Dorsolateral prefrontal cortex (tissue), 120 donors: ENCODE measurements at regions of chr1 and their contacts with region 1.

Region 1: DNA sequence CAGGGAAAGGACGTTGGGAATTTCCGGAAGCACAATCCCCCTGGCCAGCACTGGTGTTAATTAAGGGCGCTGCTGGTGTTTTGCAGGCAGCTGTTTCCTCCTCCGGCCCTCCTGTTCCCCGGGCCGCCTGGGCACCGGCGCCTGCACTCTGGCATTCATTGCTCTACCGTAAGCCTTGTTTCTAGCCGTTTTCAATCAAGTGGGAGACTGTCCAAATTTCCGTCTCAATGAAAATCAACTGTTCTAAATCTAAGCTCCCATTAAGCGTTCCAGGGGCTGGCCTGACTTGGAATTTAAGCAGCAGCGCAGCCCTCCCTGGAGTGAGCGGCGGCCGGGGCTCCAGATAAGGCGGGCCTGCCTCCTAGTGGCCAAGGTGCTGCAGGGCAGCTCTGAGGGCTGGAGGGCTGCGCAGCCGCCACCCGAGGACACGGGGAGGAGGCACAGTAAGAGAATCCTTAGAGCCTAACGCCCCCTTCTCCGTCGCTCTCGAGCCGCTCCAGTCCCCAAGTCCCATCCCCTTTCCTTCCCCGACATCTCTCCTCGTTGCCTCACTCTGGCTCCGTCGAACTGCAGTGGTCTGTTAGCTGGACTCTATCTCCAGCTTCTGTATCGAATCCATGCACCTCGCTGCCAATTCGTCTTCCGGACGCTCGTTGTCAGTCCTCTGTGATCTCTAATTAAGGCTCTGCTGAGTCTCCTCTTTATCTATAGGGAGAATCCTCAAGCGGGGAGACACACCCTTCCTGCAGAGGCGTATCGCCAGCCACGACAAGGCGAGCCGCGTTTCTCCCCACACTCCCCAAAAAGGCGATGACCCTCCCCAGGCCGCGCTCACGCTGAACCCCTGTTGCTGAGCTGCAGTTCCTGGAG is 57.8 kb upstream of the LRRC8D start:
- DNase-seq: peak; percentile 63 to 90 (median 86)
- H3K4me3 ChIP-seq: peak overlapping the region; percentile 39 to 79 (median 62)
- H3K27ac ChIP-seq: peak overlapping the region in 54 of 59 donors; percentile 5 to 88 (median 67)
- H3K27me3 ChIP-seq: no peaks in the 10 kb centered on the region
- CTCF ChIP-seq: peak; percentile 88 to 100 (median 98)

Region 2: GRCh38 chr1:89483010-89483756 is 279.8 kb before region 1 on chr1:
- intact Hi-C with region 1: loop called (anchors 2 to 5 kb)
- DNase-seq: peak; percentile 55 to 92 (median 76)
- H3K4me3 ChIP-seq: peak overlapping the region in 1 of 59 donors; percentile 6
- H3K27ac ChIP-seq: peak overlapping the region in 6 of 59 donors; percentile 2 to 45 (median 24)
- H3K27me3 ChIP-seq: no peaks in the 10 kb centered on the region
- CTCF ChIP-seq: peak; percentile 72 to 96 (median 88)

Region 3: DNA sequence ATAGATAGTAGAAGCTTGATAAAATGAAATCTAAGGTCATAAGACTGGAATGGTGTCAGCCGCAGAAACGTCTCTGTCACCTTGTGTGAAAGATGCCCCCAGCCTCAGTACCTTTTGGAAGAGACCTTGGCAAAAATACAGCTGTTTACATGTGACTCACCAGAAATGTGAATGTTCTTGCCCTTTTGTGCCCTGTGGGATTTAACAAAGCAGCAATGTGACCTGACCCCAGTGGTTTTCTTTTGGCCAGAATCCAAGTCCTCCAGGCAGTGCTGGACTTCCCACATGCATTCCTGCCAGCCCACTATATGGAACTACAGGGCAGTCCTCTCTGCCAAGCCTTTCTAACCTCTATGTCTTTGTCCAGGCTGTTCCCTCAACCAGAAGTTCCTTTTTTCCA is 157.3 kb before region 1 on chr1:
- intact Hi-C with region 1: loop called in 1 of 2 experiments (anchors 10 kb)
- DNase-seq: no peak
- H3K4me3 ChIP-seq: no peak overlapping the region
- H3K27ac ChIP-seq: peak overlapping the region in 4 of 59 donors; percentile 2 to 65 (median 37)
- H3K27me3 ChIP-seq: no peaks in the 10 kb centered on the region
- CTCF ChIP-seq: no peak

Region 4: DNA sequence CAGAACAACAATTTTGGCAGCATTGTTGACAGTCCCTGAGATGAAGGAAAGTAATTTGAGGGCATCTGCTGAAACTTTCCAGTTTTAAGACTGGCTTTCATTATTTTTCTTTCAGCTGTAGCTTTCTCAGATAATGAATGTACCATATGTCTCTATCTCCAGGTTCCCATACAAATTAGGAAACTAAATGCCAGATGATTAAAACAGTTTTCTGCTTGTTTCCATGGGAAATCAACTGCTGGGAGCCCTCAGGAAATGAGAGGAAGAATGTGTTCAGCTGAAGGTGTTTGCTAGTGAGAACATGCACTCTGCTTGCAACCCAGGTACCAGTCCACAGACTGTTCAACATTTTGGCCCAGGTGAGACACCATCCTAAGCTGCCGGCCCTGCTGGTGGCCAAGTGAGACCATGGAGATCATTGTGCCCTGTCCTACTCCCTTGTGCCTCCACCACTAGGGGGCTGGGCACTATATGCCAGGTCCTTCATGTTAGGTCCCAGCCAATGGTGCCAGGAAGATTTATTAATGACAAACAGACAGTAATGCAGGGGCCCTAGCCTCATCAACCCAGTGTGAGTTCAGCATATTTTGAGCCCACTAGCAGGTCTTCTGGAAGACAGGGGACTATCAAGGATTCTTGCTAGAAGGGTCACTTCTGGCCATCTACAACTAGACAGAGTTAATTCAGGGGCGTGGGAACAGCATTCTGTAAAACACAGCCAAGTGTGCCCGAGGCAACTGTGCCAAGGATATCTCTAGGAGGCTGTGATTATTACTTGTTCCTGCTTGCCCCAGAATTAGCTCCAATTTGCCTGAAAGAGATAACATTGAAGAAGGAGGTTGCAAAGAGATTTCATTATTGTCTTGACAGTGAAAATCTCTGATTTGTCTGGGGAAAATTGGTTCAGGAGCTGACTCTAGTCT is 147.1 kb before region 1 on chr1:
- intact Hi-C with region 1: loop called in 1 of 2 experiments (anchors 5 kb)
- DNase-seq: no peak
- H3K4me3 ChIP-seq: no peak overlapping the region
- H3K27ac ChIP-seq: peak overlapping the region in 50 of 59 donors; percentile 9 to 77 (median 56)
- H3K27me3 ChIP-seq: no peaks in the 10 kb centered on the region
- CTCF ChIP-seq: peak in 53 of 56 donors; percentile 19 to 59 (median 47)

Region 5: DNA sequence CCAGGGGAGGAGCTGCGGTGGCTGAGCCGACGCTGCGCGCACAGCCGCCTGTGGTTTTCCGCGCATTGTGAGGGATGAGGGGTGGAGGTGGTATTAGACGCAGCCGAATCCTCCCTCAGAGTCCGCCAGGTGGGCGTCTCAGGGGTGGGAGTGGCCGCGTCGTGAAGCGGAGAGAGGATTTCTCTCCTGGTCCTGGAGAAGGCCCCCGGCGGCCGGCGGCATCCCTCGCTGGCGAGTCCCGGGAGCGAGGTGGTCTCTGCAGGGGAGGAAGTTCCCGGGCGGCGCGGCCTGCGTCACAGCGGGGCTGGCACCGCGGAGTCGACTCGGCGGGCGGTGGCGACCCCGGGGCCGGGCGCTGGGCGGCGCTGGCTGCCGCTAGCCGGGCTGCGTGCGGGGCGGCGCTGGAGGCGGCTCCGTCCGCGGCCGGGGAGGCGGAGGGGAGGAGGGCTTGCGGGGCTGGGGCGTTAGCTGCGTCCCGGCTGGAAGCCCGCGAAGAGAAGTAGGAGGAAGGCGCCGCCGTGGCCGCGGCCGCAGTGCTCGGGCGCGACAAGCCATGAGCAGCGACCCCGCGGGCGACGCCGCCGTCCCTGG is 130.3 kb before region 1 on chr1 and contains the start of gene LRRC8C:
- intact Hi-C with region 1: loop called (anchors 1 to 2 kb)
- DNase-seq: peak; percentile 39 to 94 (median 78)
- H3K4me3 ChIP-seq: peak within 1 kb of the TSS; percentile 58 to 98 (median 93)
- H3K27ac ChIP-seq: peak within 1 kb of the TSS; percentile 88 to 99 (median 98)
- H3K27me3 ChIP-seq: no peaks in the 10 kb centered on the region
- CTCF ChIP-seq: peak in 44 of 56 donors; percentile 10 to 85 (median 42)
- total RNA-seq, gene LRRC8C: 10.3 to 21.7 (median 16.1) TPM